HCT116 (cell line): ENCODE measurements at regions of chr4 and their contacts with region 1.

Region 1: GRCh38 chr4:51997647-51998046 is 22.5 kb downstream of the LRRC66 start:
- DNase-seq: no peak
- ATAC-seq: peak; percentile 44; the same call in 1 of the 2 replicates
- H3K4me3 ChIP-seq: no peak overlapping the region
- H3K27ac ChIP-seq: no peak overlapping the region
- H3K4me1 ChIP-seq: no peaks in the 10 kb centered on the region
- H3K27me3 ChIP-seq: no peaks in the 10 kb centered on the region
- CTCF ChIP-seq: peak in 1 of 3 experiments; percentile 23; a peak in 3 of 6 replicates
- POLR2A ChIP-seq: no peak
- RAD21 ChIP-seq: no peak

Region 2: GRCh38 chr4:52015366-52015765 is 17.7 kb after region 1 on chr4:
- CTCF ChIA-PET with region 1: no interaction called
- POLR2A ChIA-PET with region 1: no interaction called
- RAD21 ChIA-PET with region 1: no interaction called
- intact Hi-C with region 1: no loop called
- DNase-seq: no peak
- ATAC-seq: no peak; the same call in 1 of the 2 replicates
- H3K4me3 ChIP-seq: no peak overlapping the region
- H3K27ac ChIP-seq: no peak overlapping the region
- H3K4me1 ChIP-seq: peaks cover 3 to 9% of the 10 kb centered on the region in 2 experiments
- H3K27me3 ChIP-seq: no peaks in the 10 kb centered on the region
- CTCF ChIP-seq: peak; percentile 4 to 20 (median 17); a peak in 1 of 6 replicates
- POLR2A ChIP-seq: no peak
- RAD21 ChIP-seq: peak; percentile 48

Region 3: GRCh38 chr4:52049266-52049665 is 51.6 kb after region 1 on chr4:
- CTCF ChIA-PET with region 1: no interaction called
- POLR2A ChIA-PET with region 1: no interaction called
- RAD21 ChIA-PET with region 1: no interaction called
- intact Hi-C with region 1: loop called (anchors 10 kb)
- DNase-seq: no peak
- ATAC-seq: no peak
- H3K4me3 ChIP-seq: no peak overlapping the region
- H3K27ac ChIP-seq: no peak overlapping the region
- H3K4me1 ChIP-seq: no peaks in the 10 kb centered on the region; a peak in 1 of 4 replicates
- H3K27me3 ChIP-seq: peaks cover 13% of the 10 kb centered on the region
- CTCF ChIP-seq: no peak
- POLR2A ChIP-seq: no peak
- RAD21 ChIP-seq: no peak